PC-3 (cell line): ENCODE measurements at regions of chr20 and their contacts with region 1.

Region 1: GRCh38 chr20:31822421-31823330 is 3.5 kb downstream of the MYLK2 start:
- DNase-seq: peak; percentile 58
- ATAC-seq: peak; percentile 91
- H3K4me3 ChIP-seq: peak overlapping the region; percentile 45; the same call in 1 of the 2 replicates
- H3K27ac ChIP-seq: no peak overlapping the region
- H3K4me1 ChIP-seq: no peaks in the 10 kb centered on the region
- H3K27me3 ChIP-seq: no peaks in the 10 kb centered on the region
- CTCF ChIP-seq: peak; percentile 99

Region 2: DNA sequence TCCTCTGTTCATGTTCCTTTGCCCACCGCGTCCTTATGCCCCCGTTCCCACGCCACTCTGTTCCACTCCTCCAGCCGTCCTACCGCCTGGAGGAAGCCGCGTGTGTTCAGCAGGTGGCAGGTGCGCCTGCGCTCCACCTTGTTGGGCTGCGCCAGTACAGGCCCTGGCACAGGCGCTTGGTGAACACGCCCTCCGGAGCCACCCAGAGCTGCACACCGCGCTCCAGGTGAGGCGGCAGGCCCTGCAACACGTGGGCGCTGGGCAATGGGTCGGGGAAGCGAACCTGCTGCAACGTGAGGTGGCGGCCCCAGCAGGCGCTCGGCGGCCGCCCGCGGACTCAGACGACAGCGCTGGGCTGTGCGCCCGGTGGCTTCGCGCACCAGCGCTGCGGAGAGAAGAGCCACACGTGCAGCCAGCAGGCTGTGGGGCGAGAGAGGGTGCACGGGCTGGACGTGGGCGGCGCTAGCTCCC is 26.8 kb after region 1 on chr20:
- CTCF ChIA-PET with region 1: interaction called, 6 read pairs
- POLR2A ChIA-PET with region 1: no interaction called
- intact Hi-C with region 1: loop called (anchors 1 kb)
- DNase-seq: peak; percentile 4
- ATAC-seq: peak; percentile 9; the same call in 1 of the 2 replicates
- H3K4me3 ChIP-seq: no peak overlapping the region
- H3K27ac ChIP-seq: no peak overlapping the region
- H3K4me1 ChIP-seq: 0 out of 2 replicates have a peak, but pooled peaks cover 3% of the 10 kb centered on the region
- H3K27me3 ChIP-seq: peaks cover 13% of the 10 kb centered on the region
- CTCF ChIP-seq: no peak

Region 3: DNA sequence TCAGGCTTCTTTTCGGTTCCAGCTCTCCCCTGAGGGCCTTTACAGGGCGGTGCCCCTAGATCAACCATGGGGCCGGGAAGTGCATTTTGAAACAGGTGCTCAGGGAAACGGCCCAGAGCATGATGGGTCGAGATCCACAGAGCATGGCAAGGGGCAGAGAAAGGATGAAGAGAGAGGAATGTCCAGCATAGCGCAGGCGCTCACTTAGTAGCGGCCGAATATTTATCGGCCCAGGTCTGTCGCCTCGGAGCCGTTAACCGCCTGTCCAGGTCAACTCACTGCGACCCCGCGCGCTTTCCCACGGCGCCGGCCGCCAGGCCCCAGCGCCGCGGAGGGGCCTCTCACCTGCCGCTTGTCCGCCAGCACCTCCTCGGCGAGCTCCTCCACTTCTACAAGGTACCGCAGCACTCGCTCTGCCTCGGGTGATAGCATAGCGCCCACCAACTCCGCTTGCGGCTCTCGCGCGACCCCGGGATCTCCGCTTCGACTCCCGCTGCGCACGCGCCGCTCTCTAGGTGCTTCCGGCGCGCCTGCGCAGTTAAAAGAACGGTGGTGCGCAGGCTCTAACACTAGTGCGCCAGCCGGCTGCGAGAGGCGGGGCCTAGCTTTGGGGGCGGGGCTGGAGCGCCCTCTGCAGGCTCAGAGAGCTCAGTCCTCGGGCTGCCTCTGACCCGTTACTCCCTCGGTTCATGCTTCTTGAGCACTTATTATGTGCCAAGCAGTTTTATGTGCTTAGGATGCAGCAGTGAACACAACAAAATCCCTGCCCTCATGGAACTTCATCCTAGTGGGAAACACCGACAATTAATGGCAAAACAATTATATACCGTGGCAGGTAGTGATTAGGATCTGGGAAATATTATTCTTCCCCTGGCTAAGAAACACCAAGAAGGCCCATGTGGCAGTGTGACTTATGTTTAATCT is 129.1 kb after region 1 on chr20 and contains the start of gene PDRG1:
- CTCF ChIA-PET with region 1: interaction called, 3 read pairs
- POLR2A ChIA-PET with region 1: interaction called, 3 read pairs
- intact Hi-C with region 1: loop called (anchors 1 kb)
- DNase-seq: peak; percentile 97
- ATAC-seq: peak; percentile 99
- H3K4me3 ChIP-seq: peak within 1 kb of the TSS; percentile 98
- H3K27ac ChIP-seq: no peak within 1 kb of the TSS
- H3K4me1 ChIP-seq: peaks cover 9% of the 10 kb centered on the region
- H3K27me3 ChIP-seq: peaks cover 13% of the 10 kb centered on the region
- CTCF ChIP-seq: peak; percentile 93
- total RNA-seq, gene PDRG1: 11.7 and 12.3 TPM in 2 replicates

Region 4: DNA sequence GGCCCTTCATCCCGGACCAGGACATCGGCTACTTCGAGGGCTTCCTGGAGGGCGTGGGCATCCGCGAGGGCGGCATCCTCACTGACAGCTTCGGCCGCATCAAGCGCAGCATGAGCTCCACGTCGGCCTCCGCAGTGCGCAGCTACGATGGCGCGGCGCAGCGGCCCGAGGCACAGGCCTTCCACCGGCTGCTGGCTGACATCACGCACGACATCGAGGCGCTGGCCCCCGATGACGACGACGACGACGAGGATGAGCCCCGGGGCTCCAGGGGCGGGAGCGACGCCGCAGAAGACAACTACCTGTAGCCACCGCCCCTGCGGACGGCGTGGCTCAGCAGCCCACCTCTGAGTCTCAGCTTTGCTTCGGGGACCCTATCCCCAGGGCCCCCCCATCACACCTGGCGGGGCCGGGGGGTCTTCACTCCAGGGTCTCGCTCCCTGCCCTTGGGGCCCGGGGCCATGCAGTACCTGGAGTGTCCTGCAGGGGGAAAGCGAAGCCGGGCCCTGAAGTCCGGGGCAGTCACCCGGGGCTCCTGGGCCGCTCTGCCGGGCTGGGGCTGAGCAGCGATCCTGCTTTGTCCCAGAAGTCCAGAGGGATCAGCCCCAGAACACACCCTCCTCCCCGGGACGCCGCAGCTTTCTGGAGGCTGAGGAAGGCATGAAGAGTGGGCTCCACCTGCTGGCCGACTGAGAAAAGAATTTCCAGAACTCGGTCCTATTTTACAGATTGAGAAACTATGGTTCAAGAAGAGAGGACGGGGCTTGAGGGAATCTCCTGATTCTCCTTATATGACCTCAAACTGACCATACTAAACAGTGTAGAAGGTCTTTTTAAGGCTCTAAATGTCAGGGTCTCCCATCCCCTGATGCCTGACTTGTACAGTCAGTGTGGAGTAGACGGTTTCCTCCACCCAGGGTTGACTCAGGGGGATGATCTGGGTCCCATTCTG is 208.6 kb after region 1 on chr20:
- CTCF ChIA-PET with region 1: interaction called, 4 read pairs
- POLR2A ChIA-PET with region 1: no interaction called
- intact Hi-C with region 1: loop called (anchors 1 kb)
- DNase-seq: peak; percentile 84
- ATAC-seq: peak; percentile 99
- H3K4me3 ChIP-seq: no peak overlapping the region; the same call in 1 of the 2 replicates
- H3K27ac ChIP-seq: no peak overlapping the region
- H3K4me1 ChIP-seq: no peaks in the 10 kb centered on the region
- H3K27me3 ChIP-seq: peaks cover 47% of the 10 kb centered on the region
- CTCF ChIP-seq: peak; percentile 94

Region 5: GRCh38 chr20:32091888-32092346 is 269.2 kb after region 1 on chr20:
- CTCF ChIA-PET with region 1: no interaction called
- POLR2A ChIA-PET with region 1: no interaction called
- intact Hi-C with region 1: loop called (anchors 1 kb)
- DNase-seq: peak; percentile 81
- ATAC-seq: peak; percentile 91
- H3K4me3 ChIP-seq: no peak overlapping the region
- H3K27ac ChIP-seq: no peak overlapping the region
- H3K4me1 ChIP-seq: no peaks in the 10 kb centered on the region
- H3K27me3 ChIP-seq: peaks cover 18% of the 10 kb centered on the region
- CTCF ChIP-seq: peak; percentile 91

Region 6: GRCh38 chr20:32098786-32099185 is 276.1 kb after region 1 on chr20:
- CTCF ChIA-PET with region 1: interaction called, 14 read pairs
- POLR2A ChIA-PET with region 1: no interaction called
- intact Hi-C with region 1: no loop called
- DNase-seq: no peak
- ATAC-seq: no peak
- H3K4me3 ChIP-seq: no peak overlapping the region
- H3K27ac ChIP-seq: no peak overlapping the region
- H3K4me1 ChIP-seq: no peaks in the 10 kb centered on the region
- H3K27me3 ChIP-seq: peaks cover 54% of the 10 kb centered on the region
- CTCF ChIP-seq: no peak